HEK293 (cell line): ENCODE measurements at regions of chr20 and their contacts with region 1.

Region 1: GRCh38 chr20:22453239-22454080 is 130.9 kb downstream of the FOXA2 start:
- H3K4me3 ChIP-seq: no peak overlapping the region
- H3K27ac ChIP-seq: no peak overlapping the region
- H3K4me1 ChIP-seq: no peaks in the 10 kb centered on the region
- CTCF ChIP-seq: no peak

Region 2: GRCh38 chr20:22339091-22339881 is 114.2 kb before region 1 on chr20:
- CTCF ChIA-PET with region 1: interaction called, 10 read pairs
- POLR2A ChIA-PET with region 1: no interaction called
- H3K4me3 ChIP-seq: no peak overlapping the region
- H3K27ac ChIP-seq: no peak overlapping the region
- H3K4me1 ChIP-seq: no peaks in the 10 kb centered on the region
- CTCF ChIP-seq: 0 out of 2 replicates have a peak, but pooled peaks have one; percentile 56